MCF 10A (cell line): ENCODE measurements at regions of chr20 and their contacts with region 1.

Region 1: DNA sequence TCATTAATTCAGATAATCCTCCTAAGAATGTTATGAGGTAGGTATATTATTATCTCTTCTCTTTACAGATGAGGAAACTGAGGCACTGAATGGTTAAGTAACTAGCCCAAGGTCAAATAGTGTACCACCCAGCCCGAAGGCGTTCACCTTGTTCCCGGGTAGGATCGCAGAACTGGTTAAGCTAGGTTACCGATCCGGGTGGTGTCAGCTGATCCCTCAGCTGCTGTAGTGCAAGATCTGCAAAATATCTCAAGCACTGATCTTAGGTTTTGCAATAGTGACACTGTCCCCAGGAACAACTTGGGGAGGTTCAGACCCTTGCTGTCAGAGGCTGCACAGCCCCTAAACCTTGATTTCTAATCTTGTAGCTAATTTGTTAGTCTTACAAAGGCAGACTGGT is 28.2 kb downstream of the SLC52A3 start:
- DNase-seq: no peak
- H3K4me3 Mint-ChIP-seq: no peak overlapping the region
- H3K27ac Mint-ChIP-seq: no peak overlapping the region
- H3K4me1 Mint-ChIP-seq: no peaks in the 10 kb centered on the region
- H3K27me3 Mint-ChIP-seq: peaks cover 13% of the 10 kb centered on the region
- CTCF ChIP-seq: no peak

Region 2: GRCh38 chr20:528923-529604 is 211.1 kb before region 1 on chr20:
- CTCF ChIA-PET with region 1: interaction called, 12 read pairs
- POLR2A ChIA-PET with region 1: no interaction called
- intact Hi-C with region 1: no loop called
- DNase-seq: peak; percentile 90
- H3K4me3 Mint-ChIP-seq: no peak overlapping the region
- H3K27ac Mint-ChIP-seq: peak overlapping the region; percentile 95
- H3K4me1 Mint-ChIP-seq: peaks cover 34% of the 10 kb centered on the region
- H3K27me3 Mint-ChIP-seq: no peaks in the 10 kb centered on the region
- CTCF ChIP-seq: no peak

Region 3: GRCh38 chr20:561437-562231 is 178.5 kb before region 1 on chr20:
- CTCF ChIA-PET with region 1: interaction called, 169 read pairs
- POLR2A ChIA-PET with region 1: interaction called, 7 read pairs
- intact Hi-C with region 1: loop called (anchors 1 kb)
- DNase-seq: peak; percentile 79
- H3K4me3 Mint-ChIP-seq: no peak overlapping the region
- H3K27ac Mint-ChIP-seq: no peak overlapping the region
- H3K4me1 Mint-ChIP-seq: no peaks in the 10 kb centered on the region
- H3K27me3 Mint-ChIP-seq: peaks cover 18% of the 10 kb centered on the region
- CTCF ChIP-seq: peak; percentile 98

Region 4: DNA sequence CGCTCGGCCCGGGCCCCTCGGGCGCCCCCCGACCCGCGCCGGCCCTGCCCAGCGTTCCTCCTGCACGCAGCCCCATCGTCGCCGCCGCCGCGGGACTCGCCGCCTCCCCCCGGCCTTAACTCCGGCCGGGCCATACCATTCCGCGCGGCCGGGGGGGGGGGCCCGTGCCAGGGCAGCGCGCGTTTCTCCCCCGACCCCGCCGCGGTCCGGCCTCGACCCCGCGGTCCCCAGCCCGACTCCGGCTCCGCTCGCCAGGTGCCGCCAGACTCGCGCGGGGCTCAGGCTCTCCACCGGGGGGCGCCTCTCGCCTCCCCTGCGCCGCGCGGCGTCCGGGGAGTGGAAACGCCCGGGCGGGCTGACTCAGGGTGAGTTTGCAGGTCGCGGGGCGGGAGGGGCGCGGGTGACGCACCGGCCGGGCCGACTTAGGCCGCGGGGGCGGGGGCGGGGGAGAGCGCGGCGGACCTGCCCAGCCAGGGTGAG is 87.0 kb before region 1 on chr20 and contains the start of gene SRXN1:
- CTCF ChIA-PET with region 1: interaction called, 37 read pairs
- POLR2A ChIA-PET with region 1: interaction called, 3 read pairs
- intact Hi-C with region 1: loop called (anchors 2 kb)
- DNase-seq: peak; percentile 93
- H3K4me3 Mint-ChIP-seq: peak within 1 kb of the TSS; percentile 89
- H3K27ac Mint-ChIP-seq: peak within 1 kb of the TSS; percentile 87
- H3K4me1 Mint-ChIP-seq: peaks cover 20% of the 10 kb centered on the region
- H3K27me3 Mint-ChIP-seq: no peaks in the 10 kb centered on the region
- CTCF ChIP-seq: peak; percentile 45
- total RNA-seq, gene SRXN1: 42.6 and 43.4 TPM in 2 replicates

Region 5: DNA sequence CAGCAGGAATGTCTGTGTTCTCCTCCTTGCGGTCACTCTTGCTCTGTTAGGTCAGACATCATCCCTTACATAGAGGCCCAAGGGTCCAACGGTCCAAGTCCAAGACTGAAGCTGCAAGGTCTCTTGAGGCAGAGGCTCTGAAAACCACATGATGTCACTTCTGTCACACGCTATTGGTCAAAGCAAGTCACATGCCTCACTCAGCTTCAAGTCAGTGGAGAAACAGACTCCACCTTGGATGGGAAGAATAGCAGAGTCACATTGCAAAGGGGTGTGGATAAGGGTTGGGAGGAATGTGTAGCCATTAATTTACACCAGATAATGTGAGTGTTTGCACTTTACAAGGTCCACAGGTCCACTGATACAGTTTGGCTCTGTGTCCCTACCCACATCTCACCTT is 10.7 kb after region 1 on chr20:
- CTCF ChIA-PET with region 1: interaction called, 24 read pairs
- POLR2A ChIA-PET with region 1: no interaction called
- intact Hi-C with region 1: no loop called
- DNase-seq: no peak
- H3K4me3 Mint-ChIP-seq: no peak overlapping the region
- H3K27ac Mint-ChIP-seq: no peak overlapping the region
- H3K4me1 Mint-ChIP-seq: no peaks in the 10 kb centered on the region
- H3K27me3 Mint-ChIP-seq: peaks cover 36% of the 10 kb centered on the region
- CTCF ChIP-seq: no peak

Region 6: DNA sequence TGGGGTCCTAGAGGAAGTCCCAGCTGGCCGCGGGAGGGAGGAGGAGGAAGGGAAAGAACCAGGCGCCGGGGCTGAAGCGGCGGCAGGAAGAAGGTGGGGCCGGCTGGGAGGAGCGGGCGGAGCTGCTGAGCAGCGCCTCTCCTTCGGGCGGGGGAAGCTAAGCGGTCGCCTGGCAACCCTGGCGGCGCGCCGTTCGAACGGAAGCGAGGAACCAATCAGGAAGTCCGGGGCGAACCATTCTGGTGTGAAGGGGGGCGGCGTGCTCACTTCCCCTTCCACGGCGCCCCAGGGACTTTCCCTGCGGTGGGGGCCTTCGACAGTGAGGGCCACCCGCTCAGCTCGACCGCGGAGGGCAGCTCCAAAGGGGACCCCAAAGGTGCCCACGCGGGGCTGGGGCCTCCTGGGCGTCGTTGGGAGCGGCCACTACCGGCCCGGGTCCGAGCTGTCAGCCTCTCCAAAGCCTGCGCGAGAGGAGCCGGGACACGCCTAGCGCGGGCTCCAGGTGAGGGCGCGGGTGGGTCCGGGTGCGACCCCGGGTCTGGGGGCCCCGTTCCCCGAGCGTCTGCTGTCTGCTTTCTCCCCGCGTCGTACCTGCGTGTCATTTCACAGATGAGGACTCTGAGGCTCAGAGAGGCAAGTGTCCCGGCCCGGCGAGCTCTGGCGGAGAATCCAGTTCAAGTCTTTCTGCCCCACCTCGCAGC is 93.5 kb after region 1 on chr20 and contains the start of gene FAM110A:
- CTCF ChIA-PET with region 1: no interaction called
- POLR2A ChIA-PET with region 1: no interaction called
- intact Hi-C with region 1: no loop called
- DNase-seq: peak; percentile 95
- H3K4me3 Mint-ChIP-seq: peak within 1 kb of the TSS; percentile 88
- H3K27ac Mint-ChIP-seq: peak within 1 kb of the TSS; percentile 79
- H3K4me1 Mint-ChIP-seq: peaks cover 23% of the 10 kb centered on the region
- H3K27me3 Mint-ChIP-seq: no peaks in the 10 kb centered on the region
- CTCF ChIP-seq: no peak
- total RNA-seq, gene FAM110A: 9.2 and 13.6 TPM in 2 replicates

Region 7: DNA sequence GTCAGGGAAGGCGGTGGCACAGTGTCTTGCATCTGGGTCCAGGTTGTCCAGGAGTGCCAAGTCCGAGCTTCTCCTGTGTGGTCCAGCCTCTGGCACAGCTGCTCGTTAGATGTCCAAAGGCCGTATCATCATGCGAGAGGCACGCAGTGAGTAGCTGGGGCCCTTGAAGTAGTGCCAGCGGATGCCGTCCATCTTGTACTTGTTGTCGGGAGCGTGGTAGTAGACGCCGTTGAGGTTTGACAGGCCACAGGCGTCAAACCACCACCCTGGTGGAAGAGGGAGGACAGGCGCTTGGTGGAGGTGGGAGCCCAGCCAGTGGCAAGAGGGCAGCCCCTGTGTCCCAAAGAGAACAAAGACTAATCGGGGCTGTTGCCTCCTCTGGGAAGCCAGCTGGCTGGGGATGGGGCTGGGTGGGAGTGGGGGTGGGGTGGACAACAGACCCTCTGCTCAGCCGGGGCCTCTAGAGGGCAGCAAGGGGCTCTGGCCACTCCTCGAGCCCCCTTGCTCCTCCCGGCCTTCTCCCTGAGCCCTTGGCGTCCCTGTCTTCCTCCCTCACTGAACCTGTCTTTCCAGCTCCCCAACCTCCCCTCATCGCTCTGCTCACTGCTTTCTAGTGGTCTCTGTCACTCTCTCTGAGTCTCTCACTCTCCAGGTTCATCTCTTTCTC is 132.8 kb after region 1 on chr20:
- CTCF ChIA-PET with region 1: no interaction called
- POLR2A ChIA-PET with region 1: no interaction called
- intact Hi-C with region 1: no loop called
- DNase-seq: no peak
- H3K4me3 Mint-ChIP-seq: no peak overlapping the region
- H3K27ac Mint-ChIP-seq: no peak overlapping the region
- H3K4me1 Mint-ChIP-seq: peaks cover 9% of the 10 kb centered on the region
- H3K27me3 Mint-ChIP-seq: no peaks in the 10 kb centered on the region
- CTCF ChIP-seq: no peak